CD14-positive monocyte (primary cell): ENCODE measurements at regions of chr6 and their contacts with region 1.

Region 1: GRCh38 chr6:156776840-156777576 is at the start of gene ARID1B:
- DNase-seq: peak; percentile 58 to 72 (median 71)
- H3K4me3 ChIP-seq: peak within 1 kb of the TSS; percentile 76 to 95 (median 90)
- H3K4me3 Mint-ChIP-seq: peak within 1 kb of the TSS; percentile 92 to 95
- H3K27ac ChIP-seq: peak within 1 kb of the TSS; percentile 83 to 87
- H3K27ac Mint-ChIP-seq: peak within 1 kb of the TSS; percentile 83 to 96 (median 96)
- H3K4me1 ChIP-seq: peaks cover 24 to 44% of the 10 kb centered on the region in 2 donors
- H3K4me1 Mint-ChIP-seq: peaks cover 39% of the 10 kb centered on the region
- H3K27me3 ChIP-seq: peaks cover 17 to 18% of the 10 kb centered on the region in 2 donors
- H3K27me3 Mint-ChIP-seq: peaks cover 20 to 26% (median 21%) of the 10 kb centered on the region in 3 donors
- CTCF ChIP-seq: no peak
- polyA plus RNA-seq, gene ARID1B: 3.2 to 22.1 (median 3.8) TPM

Region 2: GRCh38 chr6:156719720-156720563 is 57.1 kb before region 1 on chr6:
- intact Hi-C with region 1: loop called in 1 of 2 experiments (anchors 10 kb)
- DNase-seq: peak; percentile 82 to 85 (median 83)
- H3K4me3 ChIP-seq: peak overlapping the region; percentile 31 to 76 (median 40)
- H3K4me3 Mint-ChIP-seq: peak overlapping the region; percentile 79 to 89
- H3K27ac ChIP-seq: peak overlapping the region; percentile 69 to 90
- H3K27ac Mint-ChIP-seq: peak overlapping the region; percentile 89 to 94 (median 91)
- H3K4me1 ChIP-seq: peaks cover 20 to 28% of the 10 kb centered on the region in 2 donors
- H3K4me1 Mint-ChIP-seq: peaks cover 23% of the 10 kb centered on the region
- H3K27me3 ChIP-seq: no peaks in the 10 kb centered on the region
- H3K27me3 Mint-ChIP-seq: peaks cover 0 to 5% (median 0%) of the 10 kb centered on the region in 3 donors
- CTCF ChIP-seq: no peak

Region 3: DNA sequence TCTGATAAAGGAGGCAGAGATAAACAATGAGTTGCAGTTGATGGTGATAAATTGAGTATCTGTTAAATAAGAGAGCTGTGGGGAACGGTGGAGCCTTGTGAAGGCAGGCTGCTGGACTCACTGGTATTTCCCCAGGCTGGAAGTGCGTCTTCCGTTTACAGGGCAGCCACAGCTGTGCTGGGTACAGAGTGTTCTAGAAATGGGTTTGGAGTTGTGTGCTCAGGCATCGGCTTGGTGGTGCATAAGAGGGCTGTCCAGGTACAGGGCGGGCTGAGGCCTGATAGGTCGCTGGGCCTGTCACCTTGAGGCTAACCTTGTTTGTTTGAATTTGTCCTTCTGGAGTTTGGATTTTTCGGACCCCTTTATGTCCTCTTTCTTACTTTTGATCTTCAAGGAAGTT is 39.5 kb after region 1 on chr6:
- intact Hi-C with region 1: no loop called
- DNase-seq: peak in 1 of 3 donors; percentile 10
- H3K4me3 ChIP-seq: no peak overlapping the region
- H3K4me3 Mint-ChIP-seq: peak overlapping the region in 1 of 2 donors; percentile 6
- H3K27ac ChIP-seq: peak overlapping the region in 1 of 2 donors; percentile 9
- H3K27ac Mint-ChIP-seq: peak overlapping the region in 5 of 7 donors; percentile 18 to 85 (median 60)
- H3K4me1 ChIP-seq: peaks cover 9 to 25% of the 10 kb centered on the region in 2 donors
- H3K4me1 Mint-ChIP-seq: peaks cover 46% of the 10 kb centered on the region
- H3K27me3 ChIP-seq: no peaks in the 10 kb centered on the region
- H3K27me3 Mint-ChIP-seq: no peaks in the 10 kb centered on the region
- CTCF ChIP-seq: no peak